ENCODE measurements at regions of chr16 and their contacts with region 1.

Region 1: GRCh38 chr16:30844671-30845449 is 49.0 kb downstream of the BCL7C start:
- DNase-seq: peak; percentile 91
- H3K4me3 Mint-ChIP-seq: peak overlapping the region; percentile 24
- H3K27ac Mint-ChIP-seq: no peak overlapping the region
- H3K4me1 Mint-ChIP-seq: peaks cover 14% of the 10 kb centered on the region
- H3K27me3 Mint-ChIP-seq: no peaks in the 10 kb centered on the region
- CTCF ChIP-seq: peak; percentile 86

Region 2: DNA sequence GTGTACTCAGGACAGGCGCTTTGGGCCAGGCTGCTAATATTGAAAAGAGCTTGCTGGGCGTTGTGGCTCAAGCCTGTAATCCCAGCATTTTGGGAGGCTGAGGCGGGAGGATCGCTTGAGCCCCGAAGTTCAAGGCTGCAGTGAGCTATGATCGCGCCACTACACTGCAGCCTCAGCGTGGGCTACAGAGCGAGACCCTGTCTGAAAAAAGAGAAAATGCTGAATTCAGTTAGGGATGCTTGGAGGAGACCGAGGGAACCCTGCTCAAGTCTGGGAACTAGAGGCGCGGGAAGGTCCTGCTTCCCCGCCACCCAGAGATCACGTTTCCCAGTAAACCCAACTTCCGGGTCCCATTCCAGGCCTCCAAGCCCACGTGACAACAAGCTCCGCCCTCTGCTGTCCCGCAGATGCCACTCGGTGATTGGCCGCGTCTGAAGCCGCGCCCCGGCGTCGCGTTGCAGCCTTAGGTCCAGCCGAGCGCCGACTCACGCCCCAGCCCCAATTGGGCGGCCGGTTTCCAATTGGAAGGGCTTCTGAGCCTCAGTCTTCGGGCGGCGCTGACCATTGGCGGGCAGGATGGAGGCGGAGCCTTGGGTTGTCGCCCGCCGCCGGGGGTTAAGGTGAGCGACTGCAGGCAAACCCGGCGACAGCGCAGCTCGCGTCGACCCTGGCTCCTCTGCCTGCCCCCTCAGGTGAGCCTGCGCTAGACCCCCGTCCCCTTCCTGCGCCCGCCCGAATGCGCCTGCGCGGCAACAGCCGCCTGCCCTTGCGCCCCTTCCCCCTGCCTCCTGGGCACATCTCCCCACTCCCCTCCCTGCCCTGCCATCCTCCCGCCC is 96.8 kb before region 1 on chr16 and contains the start of gene PHKG2:
- CTCF ChIA-PET with region 1: no interaction called
- intact Hi-C with region 1: no loop called
- DNase-seq: peak; percentile 99
- H3K4me3 Mint-ChIP-seq: peak within 1 kb of the TSS; percentile 62
- H3K27ac Mint-ChIP-seq: peak within 1 kb of the TSS; percentile 73
- H3K4me1 Mint-ChIP-seq: peaks cover 45% of the 10 kb centered on the region
- H3K27me3 Mint-ChIP-seq: no peaks in the 10 kb centered on the region
- CTCF ChIP-seq: no peak
- total RNA-seq, gene PHKG2: 66.7 and 72.8 TPM in 2 replicates

Region 3: DNA sequence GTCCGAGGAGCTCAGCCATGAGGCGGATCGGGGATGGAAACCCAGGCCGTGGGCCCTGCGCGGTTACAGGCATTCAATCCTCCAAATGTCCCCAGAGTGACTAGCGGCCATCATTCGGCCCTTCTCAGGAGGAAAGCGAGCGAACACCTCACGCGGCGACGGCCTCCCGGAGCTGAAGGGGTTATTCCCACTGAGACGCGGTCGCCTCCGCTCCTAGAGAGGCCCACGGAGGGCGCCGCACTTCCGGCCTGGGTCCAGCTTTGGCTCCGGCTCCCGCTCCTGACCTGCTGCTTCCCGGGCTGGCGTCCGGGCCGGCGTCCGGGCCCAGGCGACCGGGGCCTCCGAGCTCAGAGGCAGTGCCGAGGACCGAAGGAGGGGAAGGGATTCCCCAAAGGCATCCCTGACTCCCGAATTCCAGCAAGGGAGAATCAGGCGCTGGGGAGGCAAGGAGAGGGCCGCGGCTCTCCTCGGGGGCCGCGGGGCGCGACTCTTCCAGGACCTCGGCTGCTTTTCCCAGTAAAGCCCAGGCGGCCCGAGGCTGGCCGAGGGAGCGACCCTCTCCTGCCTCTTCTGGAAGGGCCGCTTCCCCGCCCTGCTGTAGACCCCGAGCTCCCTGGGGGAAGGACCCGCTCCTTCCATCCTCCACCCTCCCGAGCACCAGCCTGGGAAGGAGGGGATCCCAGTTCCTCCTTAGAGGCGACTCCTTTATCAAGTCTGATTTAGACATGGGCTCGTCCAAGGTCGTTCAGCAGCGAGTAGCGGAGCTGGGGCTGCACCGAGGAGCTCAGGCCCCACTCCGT is 39.3 kb before region 1 on chr16:
- CTCF ChIA-PET with region 1: interaction called, 12 read pairs
- intact Hi-C with region 1: no loop called
- DNase-seq: peak; percentile 89
- H3K4me3 Mint-ChIP-seq: peak overlapping the region; percentile 78
- H3K27ac Mint-ChIP-seq: peak overlapping the region; percentile 83
- H3K4me1 Mint-ChIP-seq: peaks cover 8% of the 10 kb centered on the region
- H3K27me3 Mint-ChIP-seq: no peaks in the 10 kb centered on the region
- CTCF ChIP-seq: no peak

Region 4: DNA sequence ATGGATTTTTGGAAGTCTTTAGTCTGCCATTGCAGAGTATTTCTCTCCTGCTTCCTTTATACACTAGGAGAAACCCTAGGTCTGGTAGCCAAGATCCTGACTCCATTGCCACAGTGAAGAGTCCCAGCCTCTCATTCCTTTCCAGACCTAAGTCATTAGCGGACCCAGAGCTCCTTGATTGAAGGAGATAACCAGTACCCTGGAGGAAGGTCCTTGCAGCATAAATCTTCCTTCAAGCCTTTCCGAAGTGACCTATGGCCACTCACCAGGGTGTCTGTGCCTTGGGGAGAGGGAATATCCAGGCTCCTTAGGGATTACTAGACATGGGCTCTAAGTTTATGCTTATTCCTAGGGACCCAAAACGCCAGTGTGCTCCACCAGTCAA is 13.2 kb after region 1 on chr16:
- CTCF ChIA-PET with region 1: interaction called, 22 read pairs
- intact Hi-C with region 1: no loop called
- DNase-seq: no peak
- H3K4me3 Mint-ChIP-seq: no peak overlapping the region
- H3K27ac Mint-ChIP-seq: no peak overlapping the region
- H3K4me1 Mint-ChIP-seq: peaks cover 7% of the 10 kb centered on the region
- H3K27me3 Mint-ChIP-seq: peaks cover 17% of the 10 kb centered on the region
- CTCF ChIP-seq: no peak

Region 5: DNA sequence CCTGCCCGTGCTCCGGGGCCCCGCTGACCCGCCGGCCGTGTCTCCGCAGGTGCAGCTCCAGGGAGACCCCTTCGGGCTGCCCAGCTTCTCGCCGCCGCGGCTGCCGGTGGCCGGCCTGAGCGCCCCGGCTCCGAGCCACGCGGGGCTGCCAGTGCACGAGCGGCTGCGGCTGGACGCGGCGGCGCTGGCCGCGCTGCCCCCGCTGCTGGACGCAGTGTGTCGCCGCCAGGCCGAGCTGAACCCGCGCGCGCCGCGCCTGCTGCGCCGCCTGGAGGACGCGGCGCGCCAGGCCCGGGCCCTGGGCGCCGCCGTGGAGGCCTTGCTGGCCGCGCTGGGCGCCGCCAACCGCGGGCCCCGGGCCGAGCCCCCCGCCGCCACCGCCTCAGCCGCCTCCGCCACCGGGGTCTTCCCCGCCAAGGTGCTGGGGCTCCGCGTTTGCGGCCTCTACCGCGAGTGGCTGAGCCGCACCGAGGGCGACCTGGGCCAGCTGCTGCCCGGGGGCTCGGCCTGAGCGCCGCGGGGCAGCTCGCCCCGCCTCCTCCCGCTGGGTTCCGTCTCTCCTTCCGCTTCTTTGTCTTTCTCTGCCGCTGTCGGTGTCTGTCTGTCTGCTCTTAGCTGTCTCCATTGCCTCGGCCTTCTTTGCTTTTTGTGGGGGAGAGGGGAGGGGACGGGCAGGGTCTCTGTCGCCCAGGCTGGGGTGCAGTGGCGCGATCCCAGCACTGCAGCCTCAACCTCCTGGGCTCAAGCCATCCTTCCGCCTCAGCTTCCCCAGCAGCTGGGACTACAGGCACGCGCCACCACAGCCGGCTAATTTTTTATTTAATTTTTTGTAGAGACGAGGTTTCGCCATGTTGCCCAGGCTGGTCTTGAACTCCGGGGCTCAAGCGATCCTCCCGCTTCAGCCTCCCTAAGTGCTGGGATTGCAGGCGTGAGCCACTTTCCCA is 57.4 kb after region 1 on chr16:
- CTCF ChIA-PET with region 1: interaction called, 19 read pairs
- intact Hi-C with region 1: loop called (anchors 2 kb)
- DNase-seq: peak; percentile 82
- H3K4me3 Mint-ChIP-seq: peak overlapping the region; percentile 72
- H3K27ac Mint-ChIP-seq: peak overlapping the region; percentile 81
- H3K4me1 Mint-ChIP-seq: peaks cover 21% of the 10 kb centered on the region
- H3K27me3 Mint-ChIP-seq: no peaks in the 10 kb centered on the region
- CTCF ChIP-seq: no peak

Region 6: DNA sequence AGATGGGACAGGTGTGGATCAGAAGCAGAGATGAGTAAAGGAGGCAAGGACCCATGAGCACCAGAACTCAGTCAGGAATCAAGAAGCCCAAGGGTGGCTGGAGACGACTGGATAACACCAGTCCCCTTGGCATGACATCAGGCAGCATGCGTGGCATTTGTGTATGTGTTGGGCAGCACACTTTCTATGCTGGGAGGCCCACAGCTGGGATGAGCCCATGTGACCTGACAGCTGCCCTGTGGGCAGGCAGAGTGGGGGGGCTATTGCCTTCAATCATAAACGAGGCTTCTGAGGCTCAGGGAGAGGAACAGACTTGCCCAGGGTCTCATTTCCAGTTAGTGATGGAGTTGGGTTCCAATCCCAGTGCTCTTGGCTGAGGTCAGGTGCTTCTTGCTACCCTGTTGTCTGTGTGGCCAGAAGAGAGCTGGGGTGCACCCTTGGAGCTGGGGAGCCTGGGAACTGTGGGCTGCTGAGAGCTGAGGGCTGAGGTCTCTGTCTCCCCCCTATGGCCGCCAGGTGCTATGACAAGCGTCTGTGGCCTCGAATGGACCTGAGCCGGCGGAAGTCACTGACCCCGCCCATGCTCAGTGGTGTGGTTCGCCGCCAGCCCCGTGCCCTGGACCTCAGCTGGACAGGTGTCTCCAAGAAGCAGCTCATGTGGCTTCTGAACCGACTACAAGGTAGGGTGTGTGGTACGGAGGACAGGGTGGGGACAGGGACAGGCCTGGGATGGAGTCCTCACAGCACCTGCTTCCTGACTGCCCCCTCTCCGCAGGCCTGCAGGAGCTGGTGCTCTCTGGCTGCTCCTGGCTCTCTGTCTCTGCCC is 97.0 kb after region 1 on chr16:
- CTCF ChIA-PET with region 1: interaction called, 26 read pairs
- intact Hi-C with region 1: no loop called
- DNase-seq: peak; percentile 88
- H3K4me3 Mint-ChIP-seq: no peak overlapping the region
- H3K27ac Mint-ChIP-seq: no peak overlapping the region
- H3K4me1 Mint-ChIP-seq: peaks cover 16% of the 10 kb centered on the region
- H3K27me3 Mint-ChIP-seq: no peaks in the 10 kb centered on the region
- CTCF ChIP-seq: peak; percentile 93

Region 7: DNA sequence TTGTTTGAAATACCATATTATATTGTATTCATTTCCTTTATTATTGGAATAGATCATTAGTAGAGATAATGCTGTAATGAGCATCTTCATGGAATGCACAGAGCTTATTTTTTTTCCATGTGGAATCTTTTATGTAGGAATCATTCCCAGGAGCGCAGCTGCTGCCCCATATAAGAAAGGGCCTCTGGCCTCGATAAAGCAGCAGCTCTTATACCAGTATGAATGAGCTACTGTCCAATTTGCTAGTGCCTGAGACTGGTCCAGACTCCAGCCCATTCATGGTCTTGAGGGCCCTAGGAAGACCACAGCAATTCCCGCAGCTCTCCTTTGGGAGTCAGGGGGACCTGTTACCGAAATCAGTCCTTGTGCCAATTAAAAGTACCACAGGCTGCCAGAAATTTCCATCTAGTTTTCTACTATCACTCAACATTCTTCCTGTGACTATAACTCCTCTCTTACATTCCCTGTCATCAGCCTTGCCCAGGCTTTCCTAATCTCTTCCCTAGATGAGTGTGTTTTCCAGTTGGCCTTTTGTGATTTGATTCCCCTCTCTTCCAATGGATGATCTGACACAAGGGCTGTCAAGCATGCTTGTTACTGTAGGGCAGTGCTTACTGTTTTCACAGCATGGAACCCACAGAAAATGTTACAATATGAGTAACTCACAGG is 595.8 kb after region 1 on chr16:
- CTCF ChIA-PET with region 1: no interaction called
- intact Hi-C with region 1: no loop called
- DNase-seq: no peak
- H3K4me3 Mint-ChIP-seq: no peak overlapping the region
- H3K27ac Mint-ChIP-seq: no peak overlapping the region
- H3K4me1 Mint-ChIP-seq: peaks cover 7% of the 10 kb centered on the region
- H3K27me3 Mint-ChIP-seq: peaks cover 8% of the 10 kb centered on the region
- CTCF ChIP-seq: no peak

Measured in Calu3 (cell line).